Activated naive CD8-positive, alpha-beta T cell treated with anti-CD3 and anti-CD28 coated beads, Interleukin-2, amount 10 ng/mL, durations not matched to agents 7 days and 5 days (primary cell): ENCODE measurements at regions of chr6 and their contacts with region 1.

Region 1: GRCh38 chr6:109009236-109009961 is 85.2 kb downstream of the SESN1 start:
- DNase-seq: peak; percentile 95
- ATAC-seq: peak; percentile 94
- H3K4me3 Mint-ChIP-seq: peak overlapping the region; percentile 94
- H3K27ac Mint-ChIP-seq: peak overlapping the region; percentile 98
- H3K4me1 Mint-ChIP-seq: peaks cover 41% of the 10 kb centered on the region
- H3K27me3 Mint-ChIP-seq: no peaks in the 10 kb centered on the region

Region 2: GRCh38 chr6:109059571-109060021 is 50.2 kb after region 1 on chr6:
- POLR2A ChIA-PET with region 1: no interaction called
- DNase-seq: no peak
- ATAC-seq: peak; percentile 97
- H3K4me3 Mint-ChIP-seq: peak overlapping the region; percentile 65
- H3K27ac Mint-ChIP-seq: peak overlapping the region; percentile 73
- H3K4me1 Mint-ChIP-seq: peaks cover 31% of the 10 kb centered on the region
- H3K27me3 Mint-ChIP-seq: peaks cover 2% of the 10 kb centered on the region

Region 3: GRCh38 chr6:109071125-109071917 is 61.9 kb after region 1 on chr6:
- POLR2A ChIA-PET with region 1: interaction called, 12 read pairs
- DNase-seq: no peak
- ATAC-seq: no peak
- H3K4me3 Mint-ChIP-seq: peak overlapping the region; percentile 67
- H3K27ac Mint-ChIP-seq: peak overlapping the region; percentile 57
- H3K4me1 Mint-ChIP-seq: peaks cover 18% of the 10 kb centered on the region
- H3K27me3 Mint-ChIP-seq: no peaks in the 10 kb centered on the region